ENCODE measurements at regions of chr2 and their contacts with region 1.

Region 1: GRCh38 chr2:69372767-69373166 is 14.3 kb downstream of the GFPT1 start:
- DNase-seq: no peak
- H3K27ac ChIP-seq: no peak overlapping the region
- CTCF ChIP-seq: no peak

Region 2: DNA sequence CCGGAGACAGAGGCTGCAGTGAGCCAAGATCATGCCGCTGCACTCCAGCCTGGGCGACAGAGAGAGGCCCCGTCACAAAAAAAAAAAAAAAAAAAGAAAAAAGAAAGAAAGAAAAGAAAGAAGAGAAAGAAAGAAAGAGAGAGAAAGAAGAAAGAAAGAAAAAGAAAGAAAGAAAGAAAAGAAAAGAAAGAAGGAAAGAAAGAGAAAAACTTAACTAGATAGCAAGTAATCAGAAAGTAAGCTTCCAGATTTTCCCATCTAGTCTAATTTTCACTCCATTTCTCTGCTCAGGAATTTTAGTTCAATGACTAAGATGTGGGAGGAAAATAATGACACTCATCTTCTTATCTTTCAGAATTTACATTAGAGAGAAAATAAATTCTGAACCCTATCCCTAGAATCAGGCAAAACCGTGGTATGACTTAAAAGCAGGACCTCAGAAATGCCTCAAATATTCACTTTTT is 11.9 kb after region 1 on chr2:
- CTCF ChIA-PET with region 1: interaction called, 4 read pairs
- POLR2A ChIA-PET with region 1: interaction called, 11 read pairs
- DNase-seq: no peak
- H3K27ac ChIP-seq: no peak overlapping the region; the same call in 1 of the 2 replicates
- CTCF ChIP-seq: no peak

Region 3: DNA sequence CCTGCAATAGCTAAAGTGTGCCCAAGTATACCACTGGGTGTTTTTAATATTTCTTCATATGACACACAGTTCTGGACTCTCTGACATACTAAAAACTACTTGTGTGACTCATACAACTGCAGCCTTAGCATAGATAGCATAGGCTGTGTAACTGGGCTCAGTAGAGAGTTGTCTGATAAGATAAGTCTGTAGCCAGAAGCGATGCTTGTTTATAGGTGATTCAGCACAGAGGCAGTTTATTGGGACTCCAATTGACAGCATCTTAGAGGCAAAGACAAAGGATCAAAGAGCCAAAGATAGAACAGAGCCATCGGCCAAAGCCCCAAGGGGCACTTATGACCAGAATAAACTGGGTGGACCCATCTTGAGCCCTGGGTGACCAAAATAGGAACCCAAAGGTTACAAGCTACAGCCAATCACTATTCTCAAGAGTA is 228.4 kb after region 1 on chr2:
- CTCF ChIA-PET with region 1: no interaction called
- POLR2A ChIA-PET with region 1: no interaction called
- DNase-seq: peak; percentile 56
- H3K27ac ChIP-seq: no peak overlapping the region
- CTCF ChIP-seq: no peak